Heart right ventricle (tissue), 16 donors: ENCODE measurements at regions of chr3 and their contacts with region 1.

Region 1: DNA sequence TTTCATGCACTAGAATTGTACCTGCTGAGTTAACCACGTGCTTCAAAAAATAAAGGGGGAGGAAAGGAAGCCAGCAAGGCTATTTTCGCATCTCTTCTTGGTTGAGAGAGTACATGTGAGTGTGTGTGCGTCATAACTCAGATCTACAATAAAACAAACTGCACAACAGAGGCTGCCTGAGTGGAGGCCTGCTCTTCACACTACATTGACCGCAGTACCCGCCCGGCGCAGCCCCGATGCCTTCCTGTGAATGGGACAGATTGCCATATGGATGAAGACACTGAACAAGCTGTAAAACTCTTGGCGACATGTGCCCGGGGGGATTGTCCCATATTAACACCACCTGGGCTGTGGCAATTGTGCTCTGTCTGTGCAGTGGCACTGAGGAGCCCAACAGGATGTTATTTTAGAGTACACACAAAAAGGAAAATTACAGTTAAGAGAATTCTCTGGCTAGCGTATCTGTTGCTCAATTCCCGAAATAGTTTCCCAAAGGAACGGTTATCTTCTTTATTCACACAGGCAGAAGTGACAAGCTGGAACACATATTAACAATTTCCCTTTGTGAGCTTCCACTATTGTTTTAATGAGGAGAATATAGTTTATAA is 551.5 kb downstream of the FOXP1 start:
- DNase-seq: peak; percentile 14 to 21
- ATAC-seq: peak; percentile 36 to 68 (median 61)
- H3K4me3 ChIP-seq: no peak overlapping the region
- H3K27ac ChIP-seq: peak overlapping the region in 9 of 10 donors; percentile 26 to 81 (median 51)
- H3K4me1 ChIP-seq: peaks cover 6 to 73% (median 57%) of the 10 kb centered on the region in 9 donors
- H3K27me3 ChIP-seq: no peaks in the 10 kb centered on the region
- CTCF ChIP-seq: no peak

Region 2: GRCh38 chr3:70763894-70764293 is 268.1 kb before region 1 on chr3:
- intact Hi-C with region 1: no loop called
- DNase-seq: no peak
- ATAC-seq: no peak
- H3K4me3 ChIP-seq: no peak overlapping the region
- H3K27ac ChIP-seq: no peak overlapping the region
- H3K4me1 ChIP-seq: peaks cover 0 to 11% (median 0%) of the 10 kb centered on the region in 9 donors
- H3K27me3 ChIP-seq: no peaks in the 10 kb centered on the region
- CTCF ChIP-seq: no peak

Region 3: DNA sequence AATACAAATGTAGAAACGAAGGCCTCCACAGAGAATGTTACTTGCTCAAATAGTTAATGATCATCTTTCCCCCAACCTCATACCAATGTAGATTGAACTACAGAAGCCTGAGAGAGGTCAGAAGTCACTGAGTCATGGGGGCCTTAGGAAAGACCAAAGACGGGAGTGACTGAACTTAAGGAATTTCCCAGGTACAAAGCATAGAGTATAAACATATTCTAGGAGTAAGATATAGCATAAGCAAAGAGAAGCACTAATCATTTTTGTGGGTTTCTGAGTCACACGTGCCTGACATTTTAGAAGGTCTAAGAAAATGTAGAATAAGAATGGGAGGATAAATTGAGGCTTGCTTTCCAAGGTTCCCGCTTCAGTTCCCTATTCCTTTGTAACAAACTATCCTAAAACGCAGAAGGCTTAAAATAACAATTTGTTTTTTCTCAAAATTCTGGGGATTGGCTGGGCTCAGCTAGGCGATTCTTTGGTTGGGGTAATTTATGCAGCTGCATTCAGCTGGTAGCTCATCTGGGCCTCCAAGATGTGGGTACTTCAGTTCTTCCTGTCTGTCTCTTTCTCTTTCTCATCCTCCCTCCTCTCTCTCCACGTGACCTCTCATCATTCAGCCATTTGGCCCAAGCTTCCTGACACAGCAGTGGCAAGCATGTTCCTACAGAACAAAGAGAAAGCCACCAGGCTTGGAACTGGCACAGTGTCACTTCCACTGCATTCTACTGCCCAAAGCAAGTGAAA is 129.0 kb after region 1 on chr3:
- intact Hi-C with region 1: no loop called
- DNase-seq: no peak
- ATAC-seq: no peak
- H3K4me3 ChIP-seq: no peak overlapping the region
- H3K27ac ChIP-seq: no peak overlapping the region
- H3K4me1 ChIP-seq: peaks cover 0 to 12% (median 0%) of the 10 kb centered on the region in 9 donors
- H3K27me3 ChIP-seq: no peaks in the 10 kb centered on the region
- CTCF ChIP-seq: no peak

Region 4: GRCh38 chr3:71247221-71247976 is 215.4 kb after region 1 on chr3:
- intact Hi-C with region 1: loop called in 1 of 10 experiments (anchors 10 kb)
- DNase-seq: peak in 1 of 2 donors; percentile 24
- ATAC-seq: peak in 6 of 8 donors; percentile 24 to 66 (median 46)
- H3K4me3 ChIP-seq: no peak overlapping the region
- H3K27ac ChIP-seq: peak overlapping the region in 4 of 10 donors; percentile 40 to 82 (median 67)
- H3K4me1 ChIP-seq: peaks cover 8 to 76% (median 48%) of the 10 kb centered on the region in 9 donors
- H3K27me3 ChIP-seq: no peaks in the 10 kb centered on the region
- CTCF ChIP-seq: peak in 2 of 9 donors; percentile 14 to 15